Posterior vena cava (tissue), 2 donors: ENCODE measurements at regions of chr4 and their contacts with region 1.

Region 1: DNA sequence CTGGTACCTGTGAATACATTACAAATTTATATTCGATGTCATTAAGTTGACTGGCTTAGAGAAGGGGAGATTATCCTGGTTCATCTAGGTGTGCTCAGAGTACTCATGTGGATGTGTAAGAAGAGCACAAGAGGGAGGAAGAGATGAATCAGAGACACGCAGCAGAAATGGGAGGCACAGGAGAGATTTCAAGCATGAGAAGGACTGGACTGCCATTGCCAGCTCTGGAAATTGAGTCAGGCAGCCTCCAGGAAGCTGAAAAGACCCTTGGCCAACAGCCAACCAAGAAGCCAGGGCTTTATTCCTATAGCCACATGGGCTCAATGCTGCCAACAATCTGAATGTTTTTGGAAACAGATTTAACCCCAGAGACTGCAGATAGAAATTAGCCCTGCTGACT is 1390.0 kb downstream of the STIM2 start:
- DNase-seq: no peak

Region 2: GRCh38 chr4:27514711-27515110 is 735.9 kb before region 1 on chr4:
- intact Hi-C with region 1: loop called in 1 of 2 experiments (anchors 10 kb)
- DNase-seq: no peak

Region 3: DNA sequence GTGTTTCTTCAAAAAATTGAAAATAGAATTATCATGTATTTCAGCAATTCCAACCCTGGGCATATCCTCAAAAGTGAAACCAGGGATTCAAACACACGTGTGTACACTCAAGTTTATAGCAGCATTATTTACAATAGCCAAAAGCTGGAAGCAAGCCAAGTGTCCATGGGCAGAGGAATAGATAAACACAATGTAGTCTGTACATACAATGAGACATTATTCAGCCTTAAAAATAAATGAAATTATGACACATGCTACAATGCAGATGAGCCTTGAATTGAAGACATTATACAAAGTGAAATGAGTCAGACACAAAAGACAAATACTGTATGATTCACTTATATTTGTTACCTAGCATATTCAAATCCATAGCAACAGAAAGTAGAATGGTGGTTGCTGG is 536.6 kb before region 1 on chr4:
- intact Hi-C with region 1: no loop called
- DNase-seq: no peak

Region 4: GRCh38 chr4:28296239-28296638 is 45.6 kb after region 1 on chr4:
- intact Hi-C with region 1: no loop called
- DNase-seq: no peak

Region 5: GRCh38 chr4:28317221-28317620 is 66.6 kb after region 1 on chr4:
- intact Hi-C with region 1: no loop called
- DNase-seq: no peak